PC-9 (cell line): ENCODE measurements at regions of chr11 and their contacts with region 1.

Region 1: GRCh38 chr11:83285771-83286528 is at the start of gene CCDC90B:
- DNase-seq: peak; percentile 91 to 97
- H3K4me3 ChIP-seq: peak within 1 kb of the TSS; percentile 75
- H3K27ac ChIP-seq: peak within 1 kb of the TSS; percentile 82
- H3K4me1 ChIP-seq: peaks cover 16% of the 10 kb centered on the region
- H3K27me3 ChIP-seq: no peaks in the 10 kb centered on the region
- CTCF ChIP-seq: no peak
- total RNA-seq, gene CCDC90B: 32.2 and 36.6 TPM in 2 replicates

Region 2: GRCh38 chr11:82775736-82776346 is 510.1 kb before region 1 on chr11:
- CTCF ChIA-PET with region 1: no interaction called
- POLR2A ChIA-PET with region 1: no interaction called
- intact Hi-C with region 1: loop called (anchors 1 kb)
- DNase-seq: peak; percentile 44 to 50
- H3K4me3 ChIP-seq: no peak overlapping the region
- H3K27ac ChIP-seq: no peak overlapping the region
- H3K4me1 ChIP-seq: no peaks in the 10 kb centered on the region
- H3K27me3 ChIP-seq: no peaks in the 10 kb centered on the region
- CTCF ChIP-seq: peak; percentile 89

Region 3: DNA sequence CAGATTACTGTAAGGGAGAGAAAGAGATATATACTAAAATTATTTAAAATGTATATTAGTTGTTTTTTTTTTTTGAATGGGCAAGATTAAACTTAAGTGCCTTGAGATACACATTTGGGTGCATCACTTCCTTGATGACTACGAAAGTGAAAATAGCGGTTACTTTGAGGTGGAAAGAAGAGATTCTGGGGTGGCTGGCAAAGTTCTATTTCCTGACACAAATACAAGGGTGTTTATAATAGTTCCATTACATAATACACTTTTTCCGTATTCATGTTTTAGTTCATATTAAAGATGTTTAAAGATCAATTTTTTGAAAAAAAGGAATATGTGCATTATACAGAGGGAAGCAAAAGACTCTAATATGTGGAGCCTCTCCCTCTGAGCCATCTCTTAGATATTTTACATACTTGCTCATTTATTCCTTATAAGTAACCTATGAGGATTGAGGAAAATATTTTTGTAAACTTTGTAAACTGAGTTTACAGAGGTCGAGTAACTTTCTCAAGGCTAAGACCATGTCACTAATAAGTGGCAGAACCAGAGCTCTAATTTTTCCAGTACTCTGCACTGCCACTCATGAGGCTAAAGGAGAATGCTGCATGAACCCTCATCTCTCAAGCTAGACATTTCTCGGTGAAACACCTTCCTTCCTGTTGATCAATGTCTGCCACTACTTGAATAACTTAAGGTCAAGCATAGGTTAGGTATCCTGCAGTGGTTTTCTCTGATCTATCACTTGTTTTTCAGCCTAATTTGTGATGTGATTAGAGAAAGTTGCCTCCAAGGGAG is 325.8 kb before region 1 on chr11:
- CTCF ChIA-PET with region 1: no interaction called
- POLR2A ChIA-PET with region 1: no interaction called
- intact Hi-C with region 1: no loop called
- DNase-seq: no peak
- H3K4me3 ChIP-seq: no peak overlapping the region
- H3K27ac ChIP-seq: no peak overlapping the region
- H3K4me1 ChIP-seq: peaks cover 5% of the 10 kb centered on the region
- H3K27me3 ChIP-seq: no peaks in the 10 kb centered on the region
- CTCF ChIP-seq: no peak

Region 4: DNA sequence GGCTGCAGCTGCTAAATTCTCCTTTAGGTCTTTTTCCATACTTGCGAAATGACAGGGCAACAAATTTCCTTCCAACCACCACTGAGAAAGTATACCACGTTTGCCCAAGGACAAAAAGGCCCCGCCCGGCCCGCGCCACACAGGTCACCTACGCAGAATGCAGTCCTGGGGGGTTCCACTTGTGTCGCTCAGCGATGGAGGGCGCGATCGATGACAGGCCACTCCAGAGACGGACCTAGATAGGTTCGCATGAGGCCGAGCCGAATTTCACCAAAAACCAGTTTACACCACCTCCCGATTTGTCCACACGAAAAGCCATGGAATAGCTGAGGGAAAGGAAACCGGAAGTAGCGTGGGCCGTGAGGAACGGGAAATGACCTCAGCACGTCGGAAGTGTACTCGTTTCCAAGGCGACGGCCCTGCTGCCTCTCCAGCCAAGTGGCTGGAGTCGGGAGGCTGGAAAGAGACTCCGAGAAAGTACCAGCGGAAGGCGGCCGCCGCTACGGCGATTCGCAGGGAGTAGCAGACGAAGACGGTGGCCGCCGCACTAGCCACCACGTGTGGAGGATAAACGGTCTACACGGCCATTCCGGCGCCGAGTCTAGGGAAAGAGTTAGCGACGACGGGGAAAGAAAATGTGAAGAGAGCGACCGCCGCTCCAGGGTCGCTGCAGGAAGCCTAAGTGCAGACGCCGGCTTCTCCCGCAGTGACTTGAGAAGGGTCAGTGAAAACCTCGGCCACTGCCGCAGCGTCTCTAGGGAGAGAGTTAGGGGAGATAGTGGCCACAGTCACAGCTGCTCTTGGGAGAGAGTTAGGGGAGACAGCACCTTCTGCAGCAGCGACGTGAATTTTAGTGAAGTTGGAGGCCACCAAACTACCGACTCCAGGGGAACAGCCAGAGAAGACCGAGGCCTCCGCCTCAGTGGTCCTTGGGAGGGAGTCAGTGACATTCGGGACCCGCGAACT is 92.4 kb before region 1 on chr11 and contains the start of gene ANKRD42:
- CTCF ChIA-PET with region 1: no interaction called
- POLR2A ChIA-PET with region 1: interaction called, 6 read pairs
- intact Hi-C with region 1: loop called (anchors 10 kb)
- DNase-seq: peak; percentile 87 to 96
- H3K4me3 ChIP-seq: peak within 1 kb of the TSS; percentile 72
- H3K27ac ChIP-seq: peak within 1 kb of the TSS; percentile 42
- H3K4me1 ChIP-seq: peaks cover 32% of the 10 kb centered on the region
- H3K27me3 ChIP-seq: no peaks in the 10 kb centered on the region
- CTCF ChIP-seq: no peak
- total RNA-seq, gene ANKRD42: 6.8 and 10.4 TPM in 2 replicates

Region 5: GRCh38 chr11:83676056-83676601 is 390.2 kb after region 1 on chr11:
- CTCF ChIA-PET with region 1: no interaction called
- POLR2A ChIA-PET with region 1: no interaction called
- intact Hi-C with region 1: loop called (anchors 5 kb)
- DNase-seq: no peak
- H3K4me3 ChIP-seq: no peak overlapping the region
- H3K27ac ChIP-seq: no peak overlapping the region
- H3K4me1 ChIP-seq: no peaks in the 10 kb centered on the region
- H3K27me3 ChIP-seq: peaks cover 11% of the 10 kb centered on the region; the same call in 1 of the 2 replicates
- CTCF ChIP-seq: no peak